B cell (primary cell): ENCODE measurements at regions of chr22 and their contacts with region 1.

Region 1: GRCh38 chr22:36409911-36410756 is 22.4 kb upstream of the MYH9 start:
- DNase-seq: peak; percentile 84
- ATAC-seq: peak; percentile 63
- H3K4me3 ChIP-seq: peak overlapping the region in 4 of 5 experiments; percentile 27 to 47 (median 38)
- H3K4me3 Mint-ChIP-seq: peak overlapping the region; percentile 87
- H3K27ac ChIP-seq: peak overlapping the region; percentile 79 to 82
- H3K27ac Mint-ChIP-seq: peak overlapping the region; percentile 92
- H3K4me1 ChIP-seq: peaks cover 54 to 70% of the 10 kb centered on the region in 2 donors
- H3K4me1 Mint-ChIP-seq: peaks cover 59% of the 10 kb centered on the region
- H3K27me3 ChIP-seq: no peaks in the 10 kb centered on the region
- H3K27me3 Mint-ChIP-seq: no peaks in the 10 kb centered on the region
- CTCF ChIP-seq: no peak

Region 2: DNA sequence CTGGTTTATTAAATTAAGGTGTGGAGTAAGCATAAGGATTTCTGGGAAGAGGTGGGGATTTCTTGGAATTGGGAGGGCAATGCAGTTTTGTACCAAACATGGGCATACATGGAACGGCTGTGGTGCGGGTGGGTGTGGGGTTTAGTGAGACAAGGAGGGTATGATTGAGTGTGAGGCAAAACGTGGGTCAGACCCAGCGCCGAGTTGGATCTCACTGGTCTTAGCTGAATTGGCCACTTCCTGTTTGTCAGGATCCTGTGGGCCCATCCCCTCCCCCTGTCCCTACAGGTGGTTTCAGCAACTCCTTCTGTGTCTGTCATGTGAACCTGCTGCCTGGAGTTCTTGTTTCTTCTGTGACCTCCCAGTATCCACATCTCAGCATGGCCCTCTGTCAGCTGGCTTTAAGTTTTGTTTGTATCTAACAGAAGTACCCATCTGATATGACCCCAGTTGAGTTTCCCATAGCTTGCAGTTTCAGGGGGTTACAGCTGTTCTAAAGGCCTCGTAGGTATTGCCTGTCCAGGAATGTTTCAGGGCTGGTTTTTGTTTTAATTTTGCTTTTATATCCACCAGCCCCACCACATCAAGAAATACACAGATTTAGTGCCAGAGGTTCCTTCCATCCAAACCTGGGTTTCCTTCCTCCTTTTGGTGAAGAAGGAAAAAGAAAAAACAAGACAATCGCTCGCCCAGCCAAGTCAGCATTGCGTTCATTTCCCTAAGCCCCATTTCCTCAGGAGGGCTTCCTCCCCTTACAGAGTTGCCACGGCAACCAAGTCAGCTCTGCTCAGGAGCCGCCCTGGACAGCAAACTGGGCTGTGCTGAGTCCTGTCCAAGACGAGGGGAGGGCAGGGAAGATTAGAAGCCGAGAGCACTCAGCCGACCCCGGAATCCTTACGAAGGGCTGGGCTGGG is 151.2 kb before region 1 on chr22:
- CTCF ChIA-PET with region 1: no interaction called
- POLR2A ChIA-PET with region 1: no interaction called
- intact Hi-C with region 1: no loop called
- DNase-seq: no peak
- ATAC-seq: no peak
- H3K4me3 ChIP-seq: no peak overlapping the region
- H3K4me3 Mint-ChIP-seq: no peak overlapping the region
- H3K27ac ChIP-seq: no peak overlapping the region
- H3K27ac Mint-ChIP-seq: peak overlapping the region; percentile 46
- H3K4me1 ChIP-seq: peaks cover 5 to 12% of the 10 kb centered on the region in 2 donors
- H3K4me1 Mint-ChIP-seq: peaks cover 22% of the 10 kb centered on the region
- H3K27me3 ChIP-seq: no peaks in the 10 kb centered on the region
- H3K27me3 Mint-ChIP-seq: no peaks in the 10 kb centered on the region
- CTCF ChIP-seq: no peak

Region 3: GRCh38 chr22:36377022-36377631 is 33.0 kb before region 1 on chr22:
- CTCF ChIA-PET with region 1: no interaction called
- POLR2A ChIA-PET with region 1: interaction called, 10 read pairs
- intact Hi-C with region 1: no loop called
- DNase-seq: peak; percentile 71
- ATAC-seq: peak; percentile 71
- H3K4me3 ChIP-seq: peak overlapping the region in 4 of 5 experiments; percentile 7 to 59 (median 38)
- H3K4me3 Mint-ChIP-seq: peak overlapping the region; percentile 70
- H3K27ac ChIP-seq: peak overlapping the region; percentile 88 to 90
- H3K27ac Mint-ChIP-seq: peak overlapping the region; percentile 88
- H3K4me1 ChIP-seq: peaks cover 98 to 99% of the 10 kb centered on the region in 2 donors
- H3K4me1 Mint-ChIP-seq: peaks cover 86% of the 10 kb centered on the region
- H3K27me3 ChIP-seq: no peaks in the 10 kb centered on the region
- H3K27me3 Mint-ChIP-seq: no peaks in the 10 kb centered on the region
- CTCF ChIP-seq: no peak

Region 4: GRCh38 chr22:36398621-36399469 is 11.3 kb before region 1 on chr22:
- CTCF ChIA-PET with region 1: no interaction called
- POLR2A ChIA-PET with region 1: interaction called, 3 read pairs
- intact Hi-C with region 1: loop called (anchors 1 kb)
- DNase-seq: no peak
- ATAC-seq: no peak
- H3K4me3 ChIP-seq: no peak overlapping the region
- H3K4me3 Mint-ChIP-seq: peak overlapping the region; percentile 8
- H3K27ac ChIP-seq: peak overlapping the region in 1 of 2 donors; percentile 36
- H3K27ac Mint-ChIP-seq: peak overlapping the region; percentile 47
- H3K4me1 ChIP-seq: peaks cover 17 to 48% of the 10 kb centered on the region in 2 donors
- H3K4me1 Mint-ChIP-seq: peaks cover 43% of the 10 kb centered on the region
- H3K27me3 ChIP-seq: no peaks in the 10 kb centered on the region
- H3K27me3 Mint-ChIP-seq: no peaks in the 10 kb centered on the region
- CTCF ChIP-seq: no peak

Region 5: DNA sequence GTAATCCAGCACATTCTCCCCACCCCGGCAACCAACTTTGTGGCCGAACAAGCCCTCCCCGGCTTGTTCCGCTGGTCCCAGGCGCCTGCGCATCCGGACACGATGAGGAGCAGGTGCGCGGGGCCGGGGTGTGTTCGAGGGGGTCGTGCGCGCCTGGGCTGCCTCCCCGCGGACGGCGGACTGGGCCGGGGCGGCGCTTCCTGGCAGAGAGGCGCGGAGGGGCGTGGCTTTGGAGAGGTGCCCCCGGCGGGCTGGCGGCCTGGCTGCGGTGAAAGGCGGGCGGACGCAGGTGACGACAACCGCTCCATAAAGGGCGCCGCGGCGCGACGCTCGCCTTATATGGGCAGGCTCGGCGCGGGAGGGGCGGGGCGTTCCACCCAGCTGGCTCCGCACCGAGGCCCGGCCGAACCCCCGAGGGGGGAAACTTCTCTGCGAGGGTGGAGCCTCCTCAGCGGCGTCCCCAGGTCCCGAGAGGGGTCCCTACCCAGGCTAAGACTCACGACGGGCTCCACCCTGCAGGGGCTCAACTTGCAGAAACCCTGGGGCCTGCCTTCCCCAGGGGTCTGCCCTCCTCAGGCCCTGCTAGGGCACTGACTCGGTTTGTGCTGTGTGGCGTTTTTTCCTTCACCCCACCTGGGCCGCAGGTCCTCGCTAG is 44.9 kb after region 1 on chr22:
- CTCF ChIA-PET with region 1: interaction called, 10 read pairs
- POLR2A ChIA-PET with region 1: interaction called, 5 read pairs
- intact Hi-C with region 1: loop called (anchors 1 kb)
- DNase-seq: peak; percentile 96
- ATAC-seq: peak; percentile 62
- H3K4me3 ChIP-seq: peak overlapping the region; percentile 18 to 59 (median 54)
- H3K4me3 Mint-ChIP-seq: peak overlapping the region; percentile 77
- H3K27ac ChIP-seq: peak overlapping the region; percentile 84 to 93
- H3K27ac Mint-ChIP-seq: peak overlapping the region; percentile 91
- H3K4me1 ChIP-seq: peaks cover 50 to 60% of the 10 kb centered on the region in 2 donors
- H3K4me1 Mint-ChIP-seq: peaks cover 45% of the 10 kb centered on the region
- H3K27me3 ChIP-seq: no peaks in the 10 kb centered on the region
- H3K27me3 Mint-ChIP-seq: no peaks in the 10 kb centered on the region
- CTCF ChIP-seq: no peak